ENCODE measurements at regions of chr5 and their contacts with region 1.

Region 1: GRCh38 chr5:154072414-154073171 is 33.8 kb downstream of the MFAP3 start:
- DNase-seq: peak; percentile 92
- ATAC-seq: peak; percentile 83
- H3K4me3 Mint-ChIP-seq: no peak overlapping the region
- H3K27ac Mint-ChIP-seq: no peak overlapping the region
- H3K4me1 Mint-ChIP-seq: peaks cover 21% of the 10 kb centered on the region
- H3K27me3 Mint-ChIP-seq: no peaks in the 10 kb centered on the region

Region 2: GRCh38 chr5:154049636-154050035 is 23.0 kb before region 1 on chr5:
- CTCF ChIA-PET with region 1: interaction called, 13 read pairs
- POLR2A ChIA-PET with region 1: no interaction called
- intact Hi-C with region 1: no loop called
- DNase-seq: no peak
- ATAC-seq: no peak
- H3K4me3 Mint-ChIP-seq: no peak overlapping the region
- H3K27ac Mint-ChIP-seq: no peak overlapping the region
- H3K4me1 Mint-ChIP-seq: peaks cover 17% of the 10 kb centered on the region
- H3K27me3 Mint-ChIP-seq: no peaks in the 10 kb centered on the region

Region 3: GRCh38 chr5:154097031-154097430 is 24.4 kb after region 1 on chr5:
- CTCF ChIA-PET with region 1: interaction called, 13 read pairs
- POLR2A ChIA-PET with region 1: no interaction called
- intact Hi-C with region 1: no loop called
- DNase-seq: no peak
- ATAC-seq: no peak
- H3K4me3 Mint-ChIP-seq: no peak overlapping the region
- H3K27ac Mint-ChIP-seq: no peak overlapping the region
- H3K4me1 Mint-ChIP-seq: no peaks in the 10 kb centered on the region
- H3K27me3 Mint-ChIP-seq: peaks cover 16% of the 10 kb centered on the region

Region 4: GRCh38 chr5:154196955-154197652 is 124.5 kb after region 1 on chr5:
- CTCF ChIA-PET with region 1: interaction called, 12 read pairs
- POLR2A ChIA-PET with region 1: no interaction called
- intact Hi-C with region 1: loop called in 1 of 2 experiments (anchors 1 kb)
- DNase-seq: peak; percentile 35
- ATAC-seq: no peak
- H3K4me3 Mint-ChIP-seq: peak overlapping the region; percentile 35
- H3K27ac Mint-ChIP-seq: peak overlapping the region; percentile 90
- H3K4me1 Mint-ChIP-seq: peaks cover 71% of the 10 kb centered on the region
- H3K27me3 Mint-ChIP-seq: no peaks in the 10 kb centered on the region

Region 5: GRCh38 chr5:154445422-154446182 is 373.0 kb after region 1 on chr5 and contains the start of gene SAP30L:
- CTCF ChIA-PET with region 1: interaction called, 5 read pairs
- POLR2A ChIA-PET with region 1: no interaction called
- intact Hi-C with region 1: loop called in 1 of 2 experiments (anchors 2 kb)
- DNase-seq: peak; percentile 96
- ATAC-seq: peak; percentile 97
- H3K4me3 Mint-ChIP-seq: peak within 1 kb of the TSS; percentile 98
- H3K27ac Mint-ChIP-seq: peak within 1 kb of the TSS; percentile 96
- H3K4me1 Mint-ChIP-seq: peaks cover 40% of the 10 kb centered on the region
- H3K27me3 Mint-ChIP-seq: no peaks in the 10 kb centered on the region
- total RNA-seq, gene SAP30L: 22.1 to 24.5 TPM